B cell (primary cell): ENCODE measurements at regions of chr7 and their contacts with region 1.

Region 1: GRCh38 chr7:130084037-130084875 is 13.9 kb downstream of the KLHDC10 start:
- DNase-seq: peak; percentile 19
- ATAC-seq: no peak
- H3K4me3 ChIP-seq: no peak overlapping the region
- H3K4me3 Mint-ChIP-seq: no peak overlapping the region
- H3K27ac ChIP-seq: no peak overlapping the region
- H3K27ac Mint-ChIP-seq: no peak overlapping the region
- H3K4me1 ChIP-seq: no peaks in the 10 kb centered on the region
- H3K4me1 Mint-ChIP-seq: peaks cover 26% of the 10 kb centered on the region
- H3K27me3 ChIP-seq: no peaks in the 10 kb centered on the region
- H3K27me3 Mint-ChIP-seq: no peaks in the 10 kb centered on the region
- CTCF ChIP-seq: peak; percentile 65

Region 2: DNA sequence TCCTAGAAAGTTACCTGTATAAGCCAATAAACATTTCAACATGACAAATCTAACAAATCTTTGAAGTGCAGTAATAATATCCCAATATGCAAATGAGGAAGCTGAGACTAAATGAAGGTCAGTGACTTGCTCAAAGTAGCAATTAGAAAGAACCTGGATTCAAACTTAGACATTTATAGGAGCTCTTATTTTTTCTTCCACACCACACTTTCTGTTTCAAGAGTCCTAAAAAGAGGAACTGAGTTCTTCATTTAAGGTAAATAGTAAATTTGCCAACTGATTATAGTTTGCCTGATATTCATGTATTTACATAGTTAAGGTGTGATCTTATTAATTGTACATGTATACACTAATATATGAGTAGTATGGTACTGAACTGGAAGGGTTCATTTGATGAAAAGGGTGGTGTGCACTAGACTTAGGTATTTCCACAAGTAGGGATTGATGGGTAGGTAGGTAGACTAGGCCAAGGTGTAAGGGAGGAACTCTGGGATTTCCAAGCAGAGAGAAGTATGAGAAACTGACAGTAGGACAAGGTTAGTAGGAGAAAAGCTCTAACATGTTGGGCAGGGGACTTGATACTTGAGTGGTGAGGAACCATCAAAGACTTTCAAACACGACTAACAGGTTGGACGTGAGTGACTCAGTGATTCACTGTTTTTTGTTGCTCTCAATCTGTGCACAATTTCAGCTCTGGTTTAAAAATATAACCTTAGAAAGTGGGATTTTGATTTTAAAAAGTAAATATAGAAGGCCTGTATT is 30.3 kb after region 1 on chr7:
- CTCF ChIA-PET with region 1: interaction called, 3 read pairs
- POLR2A ChIA-PET with region 1: interaction called, 10 read pairs
- intact Hi-C with region 1: no loop called
- DNase-seq: peak; percentile 50
- ATAC-seq: peak; percentile 41
- H3K4me3 ChIP-seq: peak overlapping the region in 1 of 5 experiments; percentile 18
- H3K4me3 Mint-ChIP-seq: peak overlapping the region; percentile 35
- H3K27ac ChIP-seq: peak overlapping the region in 1 of 2 donors; percentile 60
- H3K27ac Mint-ChIP-seq: peak overlapping the region; percentile 72
- H3K4me1 ChIP-seq: peaks cover 17 to 19% of the 10 kb centered on the region in 2 donors
- H3K4me1 Mint-ChIP-seq: peaks cover 31% of the 10 kb centered on the region
- H3K27me3 ChIP-seq: no peaks in the 10 kb centered on the region
- H3K27me3 Mint-ChIP-seq: no peaks in the 10 kb centered on the region
- CTCF ChIP-seq: no peak

Region 3: DNA sequence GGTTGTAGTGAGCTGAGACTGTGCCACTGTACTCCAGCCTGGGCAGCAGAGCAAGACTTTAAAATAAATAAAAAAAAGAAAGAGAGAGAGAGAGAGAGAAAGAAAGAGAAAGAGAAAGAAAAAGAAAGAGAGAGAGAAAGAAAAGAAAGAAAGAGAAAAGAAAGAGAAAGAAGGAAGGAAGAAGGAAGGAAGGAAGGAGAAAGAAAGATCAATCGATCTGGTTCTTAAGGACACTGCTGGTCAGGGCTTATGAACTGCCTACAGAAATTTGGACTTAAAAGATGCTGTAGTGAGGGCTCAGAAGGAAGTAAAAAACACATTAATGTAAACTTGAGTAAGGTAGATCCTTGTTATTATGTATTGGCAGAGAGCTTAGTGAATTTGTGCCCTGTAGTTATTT is 521.9 kb after region 1 on chr7:
- CTCF ChIA-PET with region 1: no interaction called
- POLR2A ChIA-PET with region 1: no interaction called
- intact Hi-C with region 1: no loop called
- DNase-seq: no peak
- ATAC-seq: no peak
- H3K4me3 ChIP-seq: no peak overlapping the region
- H3K4me3 Mint-ChIP-seq: no peak overlapping the region
- H3K27ac ChIP-seq: no peak overlapping the region
- H3K27ac Mint-ChIP-seq: no peak overlapping the region
- H3K4me1 ChIP-seq: no peaks in the 10 kb centered on the region
- H3K4me1 Mint-ChIP-seq: no peaks in the 10 kb centered on the region
- H3K27me3 ChIP-seq: no peaks in the 10 kb centered on the region
- H3K27me3 Mint-ChIP-seq: no peaks in the 10 kb centered on the region
- CTCF ChIP-seq: peak; percentile 25